ENCODE measurements at regions of chr9 and their contacts with region 1.

Region 1: DNA sequence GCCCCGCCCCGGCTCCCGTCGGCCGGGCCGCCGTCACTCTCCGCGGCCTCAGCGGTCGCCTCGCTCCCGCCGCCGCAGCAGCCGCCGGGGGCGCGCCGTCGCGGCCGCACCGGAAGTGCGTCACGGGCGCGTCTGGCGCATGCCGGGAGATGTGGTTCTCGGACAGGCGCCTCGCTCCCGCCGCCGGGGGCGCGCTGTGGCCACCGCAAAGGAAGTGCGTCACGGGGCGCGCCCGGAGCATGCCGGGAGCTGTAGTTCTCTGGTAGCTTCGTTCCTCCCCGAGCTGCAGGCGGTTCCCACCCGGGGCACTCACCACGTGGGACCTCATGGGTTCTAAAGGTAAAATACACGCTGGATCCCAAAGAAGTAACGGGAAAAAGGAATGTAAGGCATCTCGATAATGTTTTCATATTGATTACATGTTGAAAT is at the start of gene UBAC1:
- DNase-seq: peak; percentile 94
- H3K4me3 Mint-ChIP-seq: peak within 1 kb of the TSS; percentile 87
- H3K27ac Mint-ChIP-seq: peak within 1 kb of the TSS; percentile 50
- H3K4me1 Mint-ChIP-seq: peaks cover 32% of the 10 kb centered on the region
- H3K27me3 Mint-ChIP-seq: no peaks in the 10 kb centered on the region
- total RNA-seq, gene UBAC1: 37.2 to 40.0 TPM

Region 2: DNA sequence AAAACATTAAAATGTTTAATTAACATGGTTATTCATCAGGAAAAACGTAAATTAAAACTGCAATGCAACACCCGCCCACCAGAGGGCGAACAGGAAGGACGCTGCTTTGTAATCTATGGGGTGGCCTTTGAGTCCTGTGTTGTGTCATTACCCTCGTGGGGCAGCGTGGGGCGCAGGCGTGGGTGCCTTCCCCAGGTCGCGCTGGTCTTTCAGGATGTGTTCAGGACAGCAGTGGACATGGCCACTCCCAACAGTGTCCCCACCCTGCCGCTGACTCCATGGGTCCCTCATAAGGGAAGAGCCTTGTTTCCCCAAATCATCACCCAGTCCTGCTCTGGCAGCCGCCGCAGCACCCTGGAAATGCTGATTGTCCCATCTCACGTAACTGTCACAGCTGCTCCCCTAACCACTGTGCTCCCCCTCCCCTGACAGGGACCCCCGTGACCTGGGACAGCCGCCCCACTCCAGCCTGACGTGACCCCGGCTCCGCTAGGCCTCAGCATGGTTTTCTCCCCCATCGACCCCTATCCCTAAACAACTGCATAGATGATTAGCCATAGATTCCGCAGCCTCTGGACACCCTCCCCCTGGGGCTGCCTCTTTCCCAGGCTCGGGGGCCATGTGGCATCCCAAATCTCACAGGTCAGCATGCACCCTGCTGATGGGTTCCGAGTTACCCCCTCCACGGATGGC is 358.4 kb before region 1 on chr9:
- CTCF ChIA-PET with region 1: no interaction called
- intact Hi-C with region 1: loop called (anchors 10 kb)
- DNase-seq: peak; percentile 70
- H3K4me3 Mint-ChIP-seq: no peak overlapping the region
- H3K27ac Mint-ChIP-seq: no peak overlapping the region
- H3K4me1 Mint-ChIP-seq: no peaks in the 10 kb centered on the region
- H3K27me3 Mint-ChIP-seq: peaks cover 4% of the 10 kb centered on the region

Region 3: DNA sequence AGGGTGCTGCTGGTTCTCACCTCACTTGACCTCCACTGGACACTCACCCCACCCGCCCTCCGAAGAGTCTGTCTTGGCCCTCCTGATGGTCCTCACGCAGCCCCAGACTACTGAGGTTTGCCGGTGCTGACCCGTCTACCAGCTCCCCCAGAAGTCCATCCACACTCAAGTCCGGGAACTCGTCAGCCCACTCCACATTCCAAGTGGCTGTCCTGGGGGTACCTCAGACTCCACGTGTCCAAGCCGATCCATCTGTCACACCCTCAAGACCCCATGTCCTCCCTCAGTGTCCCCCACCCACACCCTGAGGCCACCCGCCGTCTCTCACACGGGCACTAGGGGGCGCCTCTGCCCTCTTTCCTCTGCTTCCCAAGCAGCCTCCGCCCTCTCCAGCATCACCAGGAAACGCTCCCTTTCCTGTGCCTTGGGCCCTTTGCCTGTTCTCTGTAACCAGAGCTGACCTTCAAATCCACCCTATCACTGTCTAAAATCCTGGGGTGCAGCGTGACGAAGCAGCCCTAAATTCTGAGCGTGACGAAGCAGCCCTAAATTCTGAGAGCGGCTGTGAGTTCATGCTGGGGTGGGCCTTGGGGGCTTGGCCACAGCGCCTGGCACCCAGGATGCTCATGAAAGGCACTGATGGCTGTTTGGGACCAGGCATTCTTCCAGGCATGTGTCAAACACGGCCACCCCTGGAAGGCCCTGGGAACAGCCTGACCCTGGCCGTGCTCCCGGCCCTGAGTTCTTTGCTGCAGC is 163.6 kb before region 1 on chr9:
- CTCF ChIA-PET with region 1: interaction called, 6 read pairs
- intact Hi-C with region 1: loop called (anchors 10 kb)
- DNase-seq: peak; percentile 63
- H3K4me3 Mint-ChIP-seq: no peak overlapping the region
- H3K27ac Mint-ChIP-seq: no peak overlapping the region
- H3K4me1 Mint-ChIP-seq: no peaks in the 10 kb centered on the region
- H3K27me3 Mint-ChIP-seq: peaks cover 3% of the 10 kb centered on the region

Region 4: GRCh38 chr9:135864447-135865049 is 96.7 kb before region 1 on chr9:
- CTCF ChIA-PET with region 1: interaction called, 6 read pairs
- intact Hi-C with region 1: loop called (anchors 1 kb)
- DNase-seq: peak; percentile 84
- H3K4me3 Mint-ChIP-seq: no peak overlapping the region
- H3K27ac Mint-ChIP-seq: no peak overlapping the region
- H3K4me1 Mint-ChIP-seq: peaks cover 21% of the 10 kb centered on the region
- H3K27me3 Mint-ChIP-seq: no peaks in the 10 kb centered on the region

Region 5: DNA sequence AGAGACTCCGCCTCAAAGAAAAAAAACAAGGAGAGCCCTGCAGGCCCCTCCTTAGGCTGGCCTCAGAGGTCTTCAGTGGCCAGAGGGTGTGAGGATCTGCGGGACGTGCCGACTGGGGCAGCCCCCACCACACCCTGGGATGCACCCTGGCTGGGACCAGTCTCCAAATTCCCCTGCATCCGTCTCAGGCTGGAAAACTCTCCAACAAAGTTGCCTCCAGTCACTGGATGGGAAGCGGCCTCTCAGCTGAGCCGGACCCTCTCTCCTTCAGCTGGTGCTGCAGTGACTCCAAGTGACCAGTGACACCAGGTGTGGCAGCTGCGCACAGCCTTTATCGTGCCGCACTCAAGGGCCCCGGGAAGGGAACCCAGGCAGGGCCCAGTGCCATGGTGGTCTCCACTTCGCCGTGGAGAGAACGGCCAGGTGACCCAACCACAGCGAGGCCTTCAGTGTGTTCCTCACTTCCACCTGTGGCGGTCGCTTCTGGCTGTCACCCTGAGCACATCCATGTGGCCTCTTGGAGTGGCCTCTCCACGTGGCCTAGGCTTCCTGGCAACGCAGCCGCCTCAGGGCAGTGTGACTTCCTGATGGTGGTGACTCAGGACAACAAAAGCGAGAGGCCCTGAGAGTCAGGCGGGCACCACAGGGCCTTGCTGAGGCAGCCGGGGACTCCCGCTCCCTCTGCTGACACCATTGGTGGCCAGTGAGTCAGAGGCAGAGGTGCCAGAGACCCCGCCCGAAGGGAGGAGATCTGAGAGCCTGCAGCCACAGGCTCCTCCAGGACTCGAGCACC is 34.7 kb before region 1 on chr9:
- CTCF ChIA-PET with region 1: no interaction called
- intact Hi-C with region 1: loop called (anchors 1 kb)
- DNase-seq: peak; percentile 92
- H3K4me3 Mint-ChIP-seq: no peak overlapping the region
- H3K27ac Mint-ChIP-seq: peak overlapping the region; percentile 85
- H3K4me1 Mint-ChIP-seq: peaks cover 31% of the 10 kb centered on the region
- H3K27me3 Mint-ChIP-seq: no peaks in the 10 kb centered on the region

Region 6: DNA sequence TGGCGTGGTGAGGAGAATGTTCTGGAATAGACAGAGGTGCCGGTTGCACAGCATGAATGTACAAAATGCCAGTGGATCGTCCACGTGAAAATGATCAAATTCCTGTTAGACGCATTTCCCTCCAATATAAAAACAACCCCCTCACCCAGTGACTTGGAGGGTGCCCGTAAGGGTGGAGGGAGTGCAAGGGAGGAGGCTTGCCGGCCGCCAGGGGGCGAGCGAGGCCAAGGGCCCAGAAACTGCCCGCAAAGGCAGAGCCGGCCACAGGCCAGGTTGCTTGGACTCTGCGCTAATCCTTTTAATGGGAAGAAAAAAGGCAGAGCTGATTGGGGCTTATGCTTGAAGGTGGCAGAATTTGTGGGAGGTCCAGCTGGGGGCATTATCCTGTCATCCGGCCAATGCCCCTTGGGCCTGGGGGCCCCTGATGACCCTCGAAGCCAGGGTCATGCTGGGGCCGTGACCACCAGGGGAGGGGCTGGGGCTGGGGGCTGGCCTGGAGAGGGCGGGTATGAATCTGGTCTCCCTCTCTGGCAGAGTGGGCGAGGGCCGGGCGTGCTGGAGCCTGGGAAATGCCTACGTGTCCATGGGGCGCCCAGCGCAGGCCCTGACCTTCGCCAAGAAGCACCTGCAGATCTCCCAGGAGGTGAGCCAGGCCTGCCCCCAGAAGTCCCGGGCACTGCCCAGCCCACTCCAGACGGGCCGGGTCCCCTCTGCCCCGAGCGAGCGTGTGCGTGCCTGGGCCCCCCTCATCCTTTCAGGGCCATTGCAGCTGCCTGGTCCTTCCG is 378.1 kb after region 1 on chr9:
- CTCF ChIA-PET with region 1: no interaction called
- intact Hi-C with region 1: no loop called
- DNase-seq: no peak
- H3K4me3 Mint-ChIP-seq: no peak overlapping the region
- H3K27ac Mint-ChIP-seq: no peak overlapping the region
- H3K4me1 Mint-ChIP-seq: no peaks in the 10 kb centered on the region
- H3K27me3 Mint-ChIP-seq: no peaks in the 10 kb centered on the region